ENCODE measurements at regions of chr18 and their contacts with region 1.

Region 1: DNA sequence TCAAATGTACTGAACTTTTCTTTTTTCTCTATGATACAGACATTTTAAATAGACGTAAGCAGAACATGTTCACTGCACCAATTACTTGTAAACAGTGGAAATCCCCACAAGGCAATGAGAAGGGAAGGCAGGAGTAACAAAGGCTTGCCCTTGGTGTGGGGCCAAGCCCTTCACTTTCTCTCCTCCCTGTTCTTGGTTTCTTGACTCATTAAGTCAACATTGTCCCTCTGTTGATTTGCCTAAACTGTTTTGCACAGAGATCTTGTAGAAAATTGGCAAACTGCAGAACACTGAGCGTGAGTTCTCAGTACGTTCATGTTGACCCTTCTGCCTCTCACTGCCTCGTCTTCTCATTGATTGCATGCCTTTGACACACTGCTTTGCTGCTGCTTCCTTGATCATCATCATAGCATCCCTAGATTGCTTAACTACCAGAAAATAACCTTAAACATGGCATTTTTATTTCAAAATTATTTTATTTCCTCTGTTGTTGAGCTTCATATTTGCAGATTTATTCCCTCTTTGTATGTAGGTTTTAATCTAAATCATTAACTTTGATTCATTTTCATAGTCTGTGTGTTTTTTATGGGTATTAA is 257.7 kb downstream of the PTGR3 start:
- DNase-seq: peak; percentile 76
- H3K4me3 Mint-ChIP-seq: peak overlapping the region; percentile 54
- H3K27ac Mint-ChIP-seq: peak overlapping the region; percentile 76
- H3K4me1 Mint-ChIP-seq: peaks cover 21% of the 10 kb centered on the region
- H3K27me3 Mint-ChIP-seq: no peaks in the 10 kb centered on the region

Region 2: GRCh38 chr18:74989134-74989533 is 37.9 kb after region 1 on chr18:
- intact Hi-C with region 1: loop called (anchors 5 kb)
- DNase-seq: no peak
- H3K4me3 Mint-ChIP-seq: no peak overlapping the region
- H3K27ac Mint-ChIP-seq: no peak overlapping the region
- H3K4me1 Mint-ChIP-seq: peaks cover 38% of the 10 kb centered on the region
- H3K27me3 Mint-ChIP-seq: no peaks in the 10 kb centered on the region